Esophagus squamous epithelium (tissue), 5 donors: ENCODE measurements at regions of chr17 and their contacts with region 1.

Region 1: DNA sequence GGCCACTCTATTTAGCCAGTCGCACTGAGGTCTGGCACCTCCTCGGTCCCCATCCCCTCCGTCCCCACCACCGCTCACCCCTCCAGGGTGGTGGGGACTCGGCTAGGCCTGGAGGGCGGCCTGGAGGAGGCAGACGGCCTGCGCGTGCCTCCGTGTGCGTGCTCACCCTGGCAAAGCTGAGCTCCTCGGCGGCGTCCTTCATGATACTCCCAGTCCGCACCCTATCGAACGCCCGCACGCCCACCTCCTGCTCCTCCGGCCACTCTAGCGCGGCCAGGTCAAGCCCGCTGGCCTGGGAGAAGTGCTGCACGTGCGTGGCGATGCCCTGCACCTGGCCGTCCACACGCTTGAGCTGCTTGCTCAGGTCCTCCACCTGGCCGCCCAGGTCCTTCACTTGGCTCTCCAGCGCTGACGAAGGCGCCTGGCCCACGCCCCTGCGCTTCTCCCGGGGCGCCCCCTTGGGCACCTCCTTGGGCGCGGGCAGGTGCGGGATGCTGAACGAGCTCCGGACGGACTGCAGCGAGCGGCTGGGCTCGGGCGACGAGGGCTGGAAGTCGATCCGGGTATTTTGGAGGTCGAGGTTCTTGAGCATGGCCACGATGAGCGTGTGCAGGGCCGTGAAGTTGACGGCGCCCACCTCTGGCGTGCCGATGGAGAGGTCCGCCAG is 644 bp downstream of the QRICH2 start:
- DNase-seq: no peak
- H3K4me3 ChIP-seq: no peak overlapping the region
- H3K27ac ChIP-seq: no peak overlapping the region
- H3K4me1 ChIP-seq: peaks cover 0 to 12% (median 0%) of the 10 kb centered on the region in 3 donors
- H3K27me3 ChIP-seq: no peaks in the 10 kb centered on the region
- CTCF ChIP-seq: no peak
- POLR2A ChIP-seq: no peak

Region 2: DNA sequence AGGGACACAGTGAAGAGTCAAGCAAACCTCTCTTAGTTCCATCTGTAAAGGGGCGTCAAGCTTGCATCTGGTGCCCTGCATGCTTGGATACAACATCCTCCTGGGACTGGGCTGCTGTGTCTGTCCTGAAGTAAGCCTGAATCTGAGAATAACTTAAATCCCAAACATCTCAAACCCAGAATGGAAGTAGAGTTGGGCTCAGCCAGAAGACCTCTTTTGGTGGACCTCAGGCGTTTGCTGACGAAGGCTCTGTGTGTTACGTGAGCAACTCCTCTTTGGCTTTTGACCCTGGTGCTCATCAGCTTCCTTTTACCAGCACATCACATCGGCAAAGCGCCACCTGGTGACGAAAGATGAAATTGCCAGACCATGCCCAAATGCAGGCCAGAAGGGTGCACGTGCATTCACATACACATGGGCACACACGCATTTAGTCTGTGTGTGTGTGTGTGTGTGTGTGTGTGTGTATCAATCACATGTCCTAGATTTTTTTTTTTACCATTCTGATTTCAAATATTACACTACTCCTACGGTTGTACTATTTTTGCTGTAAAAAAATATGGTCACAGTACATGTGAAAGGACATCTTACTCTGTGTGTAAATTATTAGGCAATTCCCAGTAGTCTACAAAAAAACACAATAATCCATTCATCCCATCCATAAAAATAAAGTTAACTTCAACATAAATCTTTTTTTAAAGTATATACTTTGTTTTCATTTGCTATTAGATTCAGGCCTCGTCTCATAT is 125.2 kb before region 1 on chr17:
- intact Hi-C with region 1: no loop called
- DNase-seq: peak; percentile 55
- H3K4me3 ChIP-seq: no peak overlapping the region
- H3K27ac ChIP-seq: no peak overlapping the region
- H3K4me1 ChIP-seq: peaks cover 0 to 7% (median 0%) of the 10 kb centered on the region in 3 donors
- H3K27me3 ChIP-seq: peaks cover 0 to 4% (median 0%) of the 10 kb centered on the region in 4 donors
- CTCF ChIP-seq: peak; percentile 87 to 90 (median 89)
- POLR2A ChIP-seq: no peak

Region 3: DNA sequence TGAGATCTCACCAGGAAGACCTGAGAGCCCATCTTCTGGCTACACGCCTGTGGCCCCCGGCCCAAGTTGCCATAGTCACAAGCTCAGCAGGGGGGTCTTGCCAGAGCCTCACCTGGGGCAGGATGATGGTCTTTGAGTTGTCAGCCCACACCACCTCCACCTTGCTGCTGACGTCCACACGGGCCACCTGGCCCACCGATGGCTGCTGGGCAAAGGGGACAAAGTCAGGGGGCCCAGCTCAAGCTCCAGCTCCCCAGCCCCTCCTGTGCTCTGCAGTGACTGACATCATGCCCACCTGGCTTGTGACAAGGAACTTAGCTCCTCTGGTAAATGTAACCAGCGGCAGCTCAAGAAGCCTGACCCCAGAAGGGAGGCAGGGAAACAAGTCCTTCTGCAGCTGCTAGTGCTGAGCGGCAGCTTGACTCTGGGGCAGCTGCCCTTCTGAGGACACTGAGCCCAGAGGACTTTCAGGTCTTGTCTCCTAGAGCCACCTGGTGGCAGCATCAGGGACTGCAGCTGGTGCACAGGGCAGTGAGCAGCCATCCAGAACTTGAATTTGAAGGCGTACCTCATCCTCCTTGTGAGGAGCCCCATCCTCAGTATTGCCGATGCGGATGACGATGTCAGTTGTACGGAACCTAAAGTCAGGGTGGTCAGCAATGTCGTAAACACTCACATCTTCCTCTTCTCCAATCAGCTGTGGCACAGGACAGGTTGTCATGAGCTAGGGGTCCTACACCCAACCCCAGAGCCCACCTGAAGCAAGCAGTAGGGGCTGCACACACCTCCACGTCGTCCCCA is 90.5 kb after region 1 on chr17:
- intact Hi-C with region 1: loop called (anchors 5 kb)
- DNase-seq: peak; percentile 31
- H3K4me3 ChIP-seq: no peak overlapping the region
- H3K27ac ChIP-seq: no peak overlapping the region
- H3K4me1 ChIP-seq: peaks cover 0 to 6% (median 0%) of the 10 kb centered on the region in 3 donors
- H3K27me3 ChIP-seq: no peaks in the 10 kb centered on the region
- CTCF ChIP-seq: peak; percentile 93 to 99 (median 98)
- POLR2A ChIP-seq: no peak